GM12878 (cell line): ENCODE measurements at regions of chr5 and their contacts with region 1.

Region 1: GRCh38 chr5:98898743-98899142 is 30.1 kb downstream of the CHD1 start:
- DNase-seq: no peak
- ATAC-seq: no peak
- H3K4me3 ChIP-seq: no peak overlapping the region
- H3K27ac ChIP-seq: no peak overlapping the region
- H3K4me1 ChIP-seq: no peaks in the 10 kb centered on the region
- H3K27me3 ChIP-seq: no peaks in the 10 kb centered on the region
- CTCF ChIP-seq: no peak
- EP300 ChIP-seq: no peak
- POLR2A ChIP-seq: no peak
- RAD21 ChIP-seq: no peak

Region 2: DNA sequence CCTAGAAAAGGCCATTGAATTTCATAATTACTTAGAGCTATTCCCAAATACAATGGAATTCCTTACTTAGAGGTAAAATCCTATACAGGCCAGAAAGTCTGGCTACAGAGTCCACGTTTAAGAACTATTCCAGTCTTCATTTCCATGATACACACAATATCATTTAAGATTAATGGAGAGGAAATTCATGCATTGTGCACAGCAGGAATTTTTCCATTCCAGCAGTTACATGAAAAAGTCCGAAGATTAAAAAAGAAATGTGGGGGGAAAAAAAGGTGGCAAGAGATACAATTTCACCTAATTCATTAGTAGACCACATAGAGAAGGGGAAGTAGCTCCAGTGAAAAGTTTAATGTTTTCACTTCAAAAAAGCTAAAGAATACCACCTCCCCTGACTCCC is 33.1 kb before region 1 on chr5:
- CTCF ChIA-PET with region 1: interaction called, 3 read pairs
- POLR2A ChIA-PET with region 1: no interaction called
- RAD21 ChIA-PET with region 1: no interaction called
- SMC1A ChIA-PET with region 1: no interaction called
- in situ Hi-C with region 1: no loop called
- intact Hi-C with region 1: loop called (anchors 5 kb)
- DNase-seq: no peak
- ATAC-seq: no peak
- H3K4me3 ChIP-seq: no peak overlapping the region
- H3K27ac ChIP-seq: no peak overlapping the region
- H3K4me1 ChIP-seq: no peaks in the 10 kb centered on the region
- H3K27me3 ChIP-seq: no peaks in the 10 kb centered on the region
- CTCF ChIP-seq: no peak
- EP300 ChIP-seq: no peak
- POLR2A ChIP-seq: no peak
- RAD21 ChIP-seq: no peak

Region 3: GRCh38 chr5:99129768-99130501 is 231.2 kb after region 1 on chr5:
- CTCF ChIA-PET with region 1: no interaction called
- POLR2A ChIA-PET with region 1: no interaction called
- RAD21 ChIA-PET with region 1: no interaction called
- SMC1A ChIA-PET with region 1: no interaction called
- in situ Hi-C with region 1: no loop called
- intact Hi-C with region 1: no loop called
- DNase-seq: no peak
- ATAC-seq: no peak; the same call in 2 of the 3 replicates
- H3K4me3 ChIP-seq: no peak overlapping the region
- H3K27ac ChIP-seq: no peak overlapping the region
- H3K4me1 ChIP-seq: no peaks in the 10 kb centered on the region
- H3K27me3 ChIP-seq: no peaks in the 10 kb centered on the region
- CTCF ChIP-seq: no peak
- EP300 ChIP-seq: no peak
- POLR2A ChIP-seq: no peak
- RAD21 ChIP-seq: no peak